ENCODE measurements at regions of chr10 and their contacts with region 1.

Region 1: GRCh38 chr10:36888929-36889573 is 236.3 kb upstream of the ANKRD30A start:
- DNase-seq: peak; percentile 89
- ATAC-seq: peak; percentile 99
- H3K4me3 ChIP-seq: no peak overlapping the region
- H3K27ac ChIP-seq: no peak overlapping the region
- H3K4me1 ChIP-seq: peaks cover 16% of the 10 kb centered on the region
- H3K27me3 ChIP-seq: no peaks in the 10 kb centered on the region
- CTCF ChIP-seq: peak; percentile 95
- EP300 ChIP-seq: peak in 1 of 2 experiments; percentile 45; a peak in 3 of 4 replicates
- POLR2A ChIP-seq: no peak
- RAD21 ChIP-seq: peak; percentile 76

Region 2: GRCh38 chr10:34994565-34995142 is 1894.4 kb before region 1 on chr10:
- CTCF ChIA-PET with region 1: no interaction called
- POLR2A ChIA-PET with region 1: no interaction called
- in situ Hi-C with region 1: no loop called
- intact Hi-C with region 1: loop called (anchors 10 kb)
- DNase-seq: peak; percentile 79
- ATAC-seq: peak; percentile 90
- H3K4me3 ChIP-seq: peak overlapping the region in 1 of 3 experiments; percentile 37; a peak in 2 of 6 replicates
- H3K27ac ChIP-seq: no peak overlapping the region
- H3K4me1 ChIP-seq: peaks cover 12% of the 10 kb centered on the region
- H3K27me3 ChIP-seq: no peaks in the 10 kb centered on the region
- CTCF ChIP-seq: peak; percentile 83
- EP300 ChIP-seq: no peak
- POLR2A ChIP-seq: no peak
- RAD21 ChIP-seq: peak; percentile 71

Region 3: DNA sequence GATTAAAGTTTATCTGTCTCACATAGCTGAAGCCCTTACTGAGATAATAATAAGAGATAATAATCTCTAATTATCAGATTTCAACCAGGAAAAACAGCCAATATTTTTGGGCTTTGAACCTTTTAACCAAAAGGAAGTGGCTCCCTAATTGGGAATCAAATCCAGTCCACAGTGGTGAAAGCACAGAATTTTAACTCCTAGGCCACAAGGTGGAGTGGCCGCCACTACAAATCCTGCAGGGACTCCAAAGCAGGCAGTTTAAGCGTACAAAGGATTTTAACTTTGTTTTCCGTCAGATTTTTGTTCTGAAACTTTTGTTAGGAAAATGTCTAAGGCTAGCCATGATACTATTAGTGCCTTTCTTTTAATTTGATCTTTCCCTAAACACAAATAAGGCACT is 1652.3 kb before region 1 on chr10:
- CTCF ChIA-PET with region 1: no interaction called
- POLR2A ChIA-PET with region 1: no interaction called
- in situ Hi-C with region 1: loop called (anchors 10 kb)
- intact Hi-C with region 1: no loop called
- DNase-seq: peak; percentile 25
- ATAC-seq: peak; percentile 77
- H3K4me3 ChIP-seq: peak overlapping the region; percentile 45 to 61 (median 49)
- H3K27ac ChIP-seq: no peak overlapping the region
- H3K4me1 ChIP-seq: peaks cover 53% of the 10 kb centered on the region
- H3K27me3 ChIP-seq: no peaks in the 10 kb centered on the region; a peak in 1 of 5 replicates
- CTCF ChIP-seq: peak; percentile 67
- EP300 ChIP-seq: no peak
- POLR2A ChIP-seq: no peak
- RAD21 ChIP-seq: no peak

Region 4: GRCh38 chr10:37010741-37011140 is 121.7 kb after region 1 on chr10:
- CTCF ChIA-PET with region 1: no interaction called
- POLR2A ChIA-PET with region 1: no interaction called
- in situ Hi-C with region 1: no loop called
- intact Hi-C with region 1: no loop called
- DNase-seq: no peak
- ATAC-seq: no peak
- H3K4me3 ChIP-seq: no peak overlapping the region
- H3K27ac ChIP-seq: no peak overlapping the region
- H3K4me1 ChIP-seq: no peaks in the 10 kb centered on the region
- H3K27me3 ChIP-seq: no peaks in the 10 kb centered on the region
- CTCF ChIP-seq: no peak
- EP300 ChIP-seq: no peak
- POLR2A ChIP-seq: no peak
- RAD21 ChIP-seq: no peak

Region 5: DNA sequence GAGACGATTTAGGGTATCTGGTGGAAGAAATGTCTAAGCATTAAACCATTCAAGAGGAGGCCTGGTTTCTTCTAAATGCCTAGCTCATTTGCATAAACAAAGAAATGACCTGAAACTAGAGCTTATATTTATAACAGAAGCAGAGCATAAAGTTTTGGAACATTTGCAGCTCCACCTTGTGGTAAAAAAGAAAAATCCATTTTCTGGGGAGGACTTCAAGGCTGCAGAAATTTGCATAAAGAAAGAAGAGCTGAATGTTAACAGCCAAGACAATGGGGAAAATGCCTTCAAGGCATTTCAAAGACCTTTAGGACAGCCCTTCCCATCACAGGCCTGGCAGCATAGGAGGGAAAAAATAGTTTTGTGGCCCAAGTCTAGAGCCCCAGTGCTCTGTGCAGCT is 606.4 kb after region 1 on chr10:
- CTCF ChIA-PET with region 1: interaction called, 8 read pairs
- POLR2A ChIA-PET with region 1: no interaction called
- in situ Hi-C with region 1: loop called (anchors 25 kb)
- intact Hi-C with region 1: no loop called
- DNase-seq: no peak
- ATAC-seq: peak; percentile 56; the same call in 2 of the 3 replicates
- H3K4me3 ChIP-seq: no peak overlapping the region
- H3K27ac ChIP-seq: no peak overlapping the region
- H3K4me1 ChIP-seq: no peaks in the 10 kb centered on the region
- H3K27me3 ChIP-seq: no peaks in the 10 kb centered on the region
- CTCF ChIP-seq: peak; percentile 40
- EP300 ChIP-seq: no peak
- POLR2A ChIP-seq: no peak
- RAD21 ChIP-seq: no peak

Region 6: GRCh38 chr10:37754538-37755323 is 865.7 kb after region 1 on chr10:
- CTCF ChIA-PET with region 1: no interaction called
- POLR2A ChIA-PET with region 1: no interaction called
- in situ Hi-C with region 1: loop called (anchors 25 kb)
- intact Hi-C with region 1: loop called (anchors 5 kb)
- DNase-seq: peak; percentile 64
- ATAC-seq: peak; percentile 97
- H3K4me3 ChIP-seq: no peak overlapping the region
- H3K27ac ChIP-seq: no peak overlapping the region
- H3K4me1 ChIP-seq: peaks cover 11% of the 10 kb centered on the region
- H3K27me3 ChIP-seq: no peaks in the 10 kb centered on the region
- CTCF ChIP-seq: peak; percentile 87
- EP300 ChIP-seq: no peak
- POLR2A ChIP-seq: no peak
- RAD21 ChIP-seq: peak; percentile 71

Region 7: GRCh38 chr10:37976091-37976879 is 1087.2 kb after region 1 on chr10 and contains the start of gene ZNF25:
- CTCF ChIA-PET with region 1: no interaction called
- POLR2A ChIA-PET with region 1: no interaction called
- in situ Hi-C with region 1: no loop called
- intact Hi-C with region 1: loop called (anchors 5 kb)
- DNase-seq: peak; percentile 99
- ATAC-seq: peak; percentile 97
- H3K4me3 ChIP-seq: peak within 1 kb of the TSS; percentile 66 to 90 (median 80)
- H3K27ac ChIP-seq: peak within 1 kb of the TSS; percentile 84
- H3K4me1 ChIP-seq: peaks cover 10% of the 10 kb centered on the region
- H3K27me3 ChIP-seq: no peaks in the 10 kb centered on the region
- CTCF ChIP-seq: peak; percentile 98
- EP300 ChIP-seq: peak in 1 of 2 experiments; percentile 32; a peak in 1 of 4 replicates
- POLR2A ChIP-seq: peak; percentile 77 to 91
- RAD21 ChIP-seq: peak; percentile 53
- total RNA-seq, gene ZNF25: 1.4 and 1.6 TPM in 2 replicates